ENCODE measurements at regions of chr15 and their contacts with region 1.

Region 1: GRCh38 chr15:81265944-81266775 is 57.8 kb downstream of the STARD5 start:
- DNase-seq: peak; percentile 82 to 89 (median 86)
- ATAC-seq: peak; percentile 93 to 95
- H3K4me3 ChIP-seq: no peak overlapping the region
- H3K27ac ChIP-seq: no peak overlapping the region
- H3K4me1 ChIP-seq: no peaks in the 10 kb centered on the region
- H3K27me3 ChIP-seq: no peaks in the 10 kb centered on the region

Region 2: GRCh38 chr15:80934761-80935221 is 331.4 kb before region 1 on chr15:
- intact Hi-C with region 1: no loop called
- DNase-seq: peak; percentile 53 to 77 (median 69)
- ATAC-seq: peak; percentile 75 to 80
- H3K4me3 ChIP-seq: no peak overlapping the region
- H3K27ac ChIP-seq: no peak overlapping the region
- H3K4me1 ChIP-seq: peaks cover 10% of the 10 kb centered on the region
- H3K27me3 ChIP-seq: no peaks in the 10 kb centered on the region

Region 3: DNA sequence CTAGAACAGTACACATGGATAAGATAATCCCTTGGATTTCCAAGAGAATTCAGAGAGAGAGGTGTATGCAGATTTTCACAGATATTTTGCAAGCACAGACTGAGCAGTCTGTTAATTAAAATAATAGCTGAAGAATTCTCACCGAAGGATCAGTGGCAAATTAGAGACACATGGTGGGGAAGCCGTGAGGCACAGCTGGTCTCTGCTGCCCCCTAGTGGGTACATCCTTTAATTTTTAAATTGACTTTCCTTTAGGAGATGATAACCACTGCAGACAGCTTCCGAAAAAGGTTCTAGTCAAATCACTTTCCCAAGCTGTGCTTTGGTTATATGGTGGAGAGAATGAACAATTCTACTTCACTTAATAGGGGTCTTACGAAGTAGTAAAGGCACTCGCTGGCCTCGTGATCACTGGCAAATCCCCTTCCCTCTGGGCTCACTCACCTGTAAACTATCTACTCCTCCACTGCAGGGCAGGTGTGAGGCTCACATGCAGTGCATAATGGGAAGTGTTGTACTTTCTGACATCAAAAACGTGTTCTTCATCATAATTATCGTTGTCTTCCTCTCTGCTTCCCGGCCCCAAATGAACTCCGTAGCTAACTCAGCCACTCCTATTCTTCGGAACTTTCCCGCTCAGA is 296.0 kb before region 1 on chr15:
- intact Hi-C with region 1: loop called in 2 of 4 experiments (anchors 10 kb)
- DNase-seq: peak; percentile 35 to 68 (median 63)
- ATAC-seq: peak; percentile 61 to 70
- H3K4me3 ChIP-seq: no peak overlapping the region
- H3K27ac ChIP-seq: no peak overlapping the region
- H3K4me1 ChIP-seq: no peaks in the 10 kb centered on the region
- H3K27me3 ChIP-seq: no peaks in the 10 kb centered on the region

Region 4: DNA sequence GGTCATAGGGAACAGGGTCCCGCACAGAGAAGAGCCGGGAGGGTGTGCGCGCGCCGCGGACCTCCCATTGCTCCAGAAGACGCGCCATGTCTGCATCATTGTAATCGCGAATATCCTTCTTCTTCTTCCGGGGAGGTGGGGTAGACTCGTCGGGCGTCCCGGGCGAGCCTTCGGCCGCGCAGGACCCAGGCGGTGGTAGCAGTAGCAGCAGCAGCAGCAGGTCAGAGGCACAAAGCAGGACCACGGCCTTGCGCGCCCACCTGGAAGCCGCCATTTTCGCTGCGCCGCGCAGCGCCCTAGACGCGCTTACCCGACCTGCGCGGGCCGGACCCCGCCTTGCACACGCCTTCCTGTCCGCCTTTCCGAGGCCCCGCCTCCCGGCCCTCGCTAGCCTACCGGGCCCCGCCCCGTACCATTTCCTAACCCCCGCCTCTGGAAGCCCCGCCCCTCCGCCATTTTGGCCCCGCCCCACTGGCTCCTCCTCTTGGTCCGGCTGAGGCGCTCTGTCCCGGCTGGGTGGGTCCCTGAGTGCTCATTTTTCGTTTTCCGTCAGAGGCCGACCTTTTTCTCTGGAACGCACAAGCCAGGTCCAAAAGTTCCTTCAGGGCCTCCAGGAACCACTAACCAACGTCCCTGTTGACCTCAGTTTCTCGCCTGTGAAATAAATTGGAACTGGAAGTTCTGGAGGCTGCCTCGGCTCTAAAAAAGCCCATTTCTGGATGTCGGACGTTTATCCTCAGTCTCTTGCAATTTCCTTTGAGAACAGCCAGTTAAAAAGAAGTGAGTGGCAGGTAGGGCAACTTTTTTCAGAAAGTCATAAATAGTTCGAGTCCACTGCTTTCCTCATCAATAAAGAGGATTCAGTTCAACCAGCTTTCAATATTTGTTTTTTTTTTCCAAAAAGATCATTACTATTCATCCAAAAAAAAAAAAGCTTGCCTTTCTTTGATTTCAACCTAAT is 276.4 kb before region 1 on chr15 and contains the start of gene MESD:
- intact Hi-C with region 1: loop called in 1 of 4 experiments (anchors 10 kb)
- DNase-seq: peak; percentile 98 to 100 (median 99)
- ATAC-seq: peak; percentile 98 to 99
- H3K4me3 ChIP-seq: peak within 1 kb of the TSS; percentile 57
- H3K27ac ChIP-seq: peak within 1 kb of the TSS; percentile 95
- H3K4me1 ChIP-seq: peaks cover 13% of the 10 kb centered on the region
- H3K27me3 ChIP-seq: no peaks in the 10 kb centered on the region
- total RNA-seq, gene MESD: 15.7 to 18.9 (median 17.3) TPM

Region 5: DNA sequence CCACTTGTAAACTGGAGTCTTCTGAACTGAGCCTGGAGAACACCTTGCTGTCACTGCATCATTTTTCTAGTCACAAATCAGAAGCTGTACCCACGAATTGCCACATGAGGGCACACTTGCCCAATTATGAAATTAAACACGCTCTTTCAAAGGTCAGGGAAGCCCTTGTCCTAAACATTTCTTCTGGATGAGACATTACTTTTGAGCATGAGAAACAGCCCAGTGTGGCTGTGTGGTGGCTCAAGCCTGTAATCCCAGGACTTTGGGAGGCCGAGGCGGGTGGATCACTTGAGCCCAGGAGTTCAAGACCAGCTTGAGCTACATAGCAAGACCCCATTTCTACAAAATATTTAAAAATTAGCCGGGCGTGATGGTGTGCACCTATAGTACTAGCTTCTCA is 159.6 kb before region 1 on chr15:
- intact Hi-C with region 1: loop called (anchors 2 to 5 kb)
- DNase-seq: peak in 2 of 3 donors; percentile 31 to 64
- ATAC-seq: peak; percentile 71 to 83
- H3K4me3 ChIP-seq: no peak overlapping the region
- H3K27ac ChIP-seq: no peak overlapping the region
- H3K4me1 ChIP-seq: peaks cover 2% of the 10 kb centered on the region
- H3K27me3 ChIP-seq: no peaks in the 10 kb centered on the region

Region 6: DNA sequence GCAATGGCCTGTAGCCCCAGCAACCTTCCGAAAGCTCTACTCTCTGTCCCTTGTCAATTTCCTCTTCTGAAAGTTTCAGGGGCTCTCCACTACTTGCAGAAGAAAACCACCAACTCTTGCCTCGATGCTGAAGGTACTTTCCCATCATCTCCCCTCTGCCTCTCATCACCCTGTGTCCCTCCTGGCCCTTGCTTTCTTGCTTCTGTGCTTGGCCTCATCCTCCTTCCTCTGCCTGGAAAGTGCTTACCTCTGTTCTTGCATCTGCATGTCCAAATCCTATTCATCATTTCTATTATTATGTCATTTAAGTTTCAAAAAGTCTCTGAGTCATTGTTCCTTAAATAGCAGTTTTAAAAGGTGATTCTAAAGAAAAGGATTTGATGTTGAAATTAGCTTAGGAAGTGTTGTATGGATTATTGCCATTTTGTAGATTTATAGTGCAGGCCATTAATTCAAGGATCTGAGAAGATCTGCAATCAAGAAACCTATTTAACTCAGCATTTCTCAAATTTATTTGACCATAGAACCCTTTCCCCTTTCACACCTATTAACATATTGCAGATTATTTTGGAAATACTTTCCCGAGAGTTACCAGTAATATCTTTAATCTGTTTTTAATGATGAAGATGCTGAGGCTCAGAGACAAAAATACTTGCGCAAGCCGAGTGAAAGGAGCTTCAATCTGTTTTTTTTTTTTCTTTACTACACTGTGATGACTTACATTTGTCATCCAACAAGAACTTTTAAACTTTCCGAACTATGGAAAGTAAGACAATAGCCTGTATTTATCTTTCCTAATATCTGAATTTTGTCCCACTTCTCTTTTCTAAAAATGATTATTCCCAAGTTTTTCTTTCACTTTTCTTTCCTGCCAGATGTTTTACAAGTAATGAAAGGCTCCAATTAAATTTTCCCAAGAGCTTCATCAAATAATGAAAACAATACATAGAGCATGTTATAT is 154.4 kb before region 1 on chr15:
- intact Hi-C with region 1: loop called (anchors 2 to 5 kb)
- DNase-seq: no peak
- ATAC-seq: no peak
- H3K4me3 ChIP-seq: no peak overlapping the region
- H3K27ac ChIP-seq: no peak overlapping the region
- H3K4me1 ChIP-seq: peaks cover 2% of the 10 kb centered on the region
- H3K27me3 ChIP-seq: no peaks in the 10 kb centered on the region

Region 7: GRCh38 chr15:81155375-81156218 is 110.6 kb before region 1 on chr15:
- intact Hi-C with region 1: loop called in 3 of 4 experiments (anchors 5 to 10 kb)
- DNase-seq: peak in 1 of 3 donors; percentile 30
- ATAC-seq: peak; percentile 28 to 48
- H3K4me3 ChIP-seq: no peak overlapping the region
- H3K27ac ChIP-seq: no peak overlapping the region
- H3K4me1 ChIP-seq: peaks cover 3% of the 10 kb centered on the region
- H3K27me3 ChIP-seq: no peaks in the 10 kb centered on the region

Measured in right cardiac atrium (tissue), 5 donors.